Posterior vena cava (tissue), 2 donors: ENCODE measurements at regions of chr17 and their contacts with region 1.

Region 1: GRCh38 chr17:39147221-39148185 is 3.9 kb downstream of the PLXDC1 start:
- DNase-seq: no peak

Region 2: DNA sequence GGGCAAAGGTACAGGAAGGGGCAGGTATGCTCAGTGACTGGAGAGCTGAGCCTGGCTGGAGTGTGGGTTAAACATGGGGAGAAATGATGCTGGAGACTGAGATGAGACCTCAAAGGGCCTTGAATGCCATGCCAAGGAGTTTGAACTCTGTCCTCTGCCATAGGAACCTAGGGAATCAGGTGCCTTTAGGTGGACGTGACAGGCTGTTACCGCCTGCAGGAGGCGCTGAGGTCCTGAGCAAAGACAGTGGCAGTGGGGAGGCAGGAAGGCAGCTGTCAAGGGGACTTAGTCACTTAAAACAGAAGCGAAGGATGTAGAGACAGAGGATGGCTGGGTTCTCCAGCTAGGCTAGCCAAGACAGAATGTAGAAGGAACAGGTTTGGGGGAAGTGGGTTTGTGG is 385.9 kb before region 1 on chr17:
- intact Hi-C with region 1: no loop called
- DNase-seq: no peak

Region 3: DNA sequence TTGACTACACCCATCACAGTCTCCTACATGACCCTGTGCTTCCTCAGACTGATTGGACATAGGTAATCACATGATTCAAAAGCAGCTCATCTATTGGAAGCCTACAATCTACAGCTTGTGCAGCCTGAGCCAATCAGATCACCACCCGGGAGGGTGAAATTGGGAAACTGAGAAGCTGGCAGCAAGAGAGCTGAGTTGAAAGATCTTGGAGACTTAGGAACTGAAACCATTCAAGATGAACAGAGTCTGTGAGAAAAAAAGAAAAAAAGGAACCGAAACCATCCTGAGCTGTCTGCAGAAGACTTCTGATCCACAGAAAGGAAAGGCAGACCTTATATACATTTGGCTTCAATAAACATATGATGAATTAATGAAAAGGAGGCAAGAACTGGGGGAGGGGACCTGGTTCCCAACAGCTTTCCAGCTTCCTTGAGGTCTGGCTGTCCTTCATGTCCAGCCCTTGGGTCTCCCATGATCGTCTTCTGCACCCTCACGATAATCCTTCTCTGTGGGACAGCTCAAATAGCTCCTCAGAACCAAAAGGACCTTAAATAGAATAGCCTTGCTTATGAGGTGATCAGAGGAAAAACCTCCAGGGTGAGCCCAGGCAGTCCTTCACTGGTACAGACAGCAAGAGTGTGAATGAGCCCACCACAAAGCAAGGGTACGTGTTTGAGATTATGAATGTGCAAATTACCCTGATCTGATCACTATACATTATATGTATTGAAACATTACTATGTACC is 28.7 kb before region 1 on chr17:
- intact Hi-C with region 1: loop called in 1 of 2 experiments (anchors 1 kb)
- DNase-seq: no peak